ENCODE measurements at regions of chr7 and their contacts with region 1.

Region 1: DNA sequence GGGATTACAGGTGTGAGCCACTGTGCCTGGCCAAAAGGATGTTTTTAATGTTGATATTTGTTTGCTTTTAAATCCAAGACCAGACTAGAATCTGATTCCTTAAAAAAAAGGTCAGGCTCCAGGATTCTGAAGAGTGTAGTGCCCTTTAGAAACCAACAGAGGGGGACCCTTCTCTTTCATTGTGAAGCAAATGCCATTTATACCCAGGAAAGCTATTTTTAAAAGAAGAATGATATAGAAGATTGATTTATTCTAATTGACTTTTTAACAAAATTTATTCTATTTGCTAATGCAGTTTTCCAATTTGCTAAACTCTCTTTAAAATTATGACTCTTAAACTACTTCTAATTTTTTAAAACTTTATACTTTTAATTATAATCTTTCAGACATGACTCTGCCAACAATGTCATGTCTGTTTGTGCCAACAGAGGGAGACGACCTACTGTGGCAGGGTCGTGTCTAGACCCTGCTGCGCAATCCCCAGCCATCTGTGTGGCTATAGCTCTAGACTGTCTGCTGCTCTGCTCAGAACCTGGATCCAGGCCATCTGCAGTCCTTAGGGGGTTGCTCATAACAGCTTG is 201.0 kb upstream of the IMMP2L start:
- DNase-seq: no peak
- H3K4me3 ChIP-seq: no peak overlapping the region
- H3K27ac ChIP-seq: no peak overlapping the region
- H3K4me1 ChIP-seq: no peaks in the 10 kb centered on the region
- H3K27me3 ChIP-seq: no peaks in the 10 kb centered on the region
- CTCF ChIP-seq: peak in 1 of 3 donors; percentile 46
- EP300 ChIP-seq: no peak
- POLR2A ChIP-seq: no peak

Region 2: DNA sequence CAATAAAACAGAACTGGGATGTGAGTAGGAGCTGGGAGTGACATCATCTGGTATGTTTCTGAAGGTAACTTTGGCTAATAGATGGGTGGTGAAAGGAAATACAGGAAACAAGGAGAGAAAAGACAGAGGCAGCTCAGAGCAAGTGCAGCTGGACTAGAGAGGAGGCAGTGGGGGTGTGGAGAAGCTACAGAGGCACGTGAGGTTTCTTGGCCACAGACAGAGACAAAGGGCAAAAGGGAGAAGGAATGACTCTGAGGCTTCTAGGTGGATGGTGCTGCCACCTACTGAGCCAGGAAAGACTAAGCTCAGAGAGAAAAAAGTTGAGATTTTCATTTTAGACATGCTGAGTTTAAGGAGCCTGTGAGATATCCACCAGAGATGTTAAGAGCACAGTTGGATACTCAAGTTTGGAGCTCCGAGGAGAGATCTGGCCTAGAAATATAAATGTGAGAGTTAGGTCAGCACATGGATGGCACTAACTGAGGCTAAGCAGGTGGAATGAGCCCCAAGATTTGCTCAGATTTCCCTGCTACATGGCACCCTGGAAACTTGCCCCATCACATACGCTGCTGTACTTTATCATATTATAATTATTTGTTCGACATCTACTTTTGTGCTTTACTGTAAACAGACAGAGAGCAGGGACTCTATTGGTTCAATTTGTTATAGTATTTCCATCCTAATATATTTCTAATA is 92.0 kb after region 1 on chr7:
- intact Hi-C with region 1: loop called in 1 of 4 experiments (anchors 10 kb)
- DNase-seq: peak in 1 of 5 donors; percentile 49
- H3K4me3 ChIP-seq: no peak overlapping the region
- H3K27ac ChIP-seq: no peak overlapping the region
- H3K4me1 ChIP-seq: no peaks in the 10 kb centered on the region
- H3K27me3 ChIP-seq: no peaks in the 10 kb centered on the region
- CTCF ChIP-seq: no peak
- EP300 ChIP-seq: no peak
- POLR2A ChIP-seq: no peak

Region 3: GRCh38 chr7:112383671-112384417 is 620.5 kb after region 1 on chr7:
- intact Hi-C with region 1: loop called in 1 of 4 experiments (anchors 10 kb)
- DNase-seq: no peak
- H3K4me3 ChIP-seq: no peak overlapping the region
- H3K27ac ChIP-seq: no peak overlapping the region
- H3K4me1 ChIP-seq: no peaks in the 10 kb centered on the region
- H3K27me3 ChIP-seq: no peaks in the 10 kb centered on the region
- CTCF ChIP-seq: no peak
- EP300 ChIP-seq: no peak
- POLR2A ChIP-seq: no peak